ENCODE measurements at regions of chr3 and their contacts with region 1.

Region 1: GRCh38 chr3:49719214-49719884 is at the start of gene AMIGO3:
- DNase-seq: peak; percentile 92 to 93
- ATAC-seq: peak; percentile 74 to 86 (median 75)
- H3K4me3 ChIP-seq: peak within 1 kb of the TSS; percentile 75
- H3K4me3 Mint-ChIP-seq: peak within 1 kb of the TSS; percentile 93
- H3K27ac ChIP-seq: peak within 1 kb of the TSS; percentile 71
- H3K27ac Mint-ChIP-seq: peak within 1 kb of the TSS; percentile 87 to 93
- H3K4me1 ChIP-seq: peaks cover 42% of the 10 kb centered on the region
- H3K4me1 Mint-ChIP-seq: peaks cover 32 to 42% of the 10 kb centered on the region in 2 donors
- H3K27me3 ChIP-seq: no peaks in the 10 kb centered on the region
- H3K27me3 Mint-ChIP-seq: no peaks in the 10 kb centered on the region
- CTCF ChIP-seq: peak; percentile 85
- total RNA-seq, gene AMIGO3: 1.3 to 1.9 TPM in 2 of 3 donors, not detected in the other

Region 2: DNA sequence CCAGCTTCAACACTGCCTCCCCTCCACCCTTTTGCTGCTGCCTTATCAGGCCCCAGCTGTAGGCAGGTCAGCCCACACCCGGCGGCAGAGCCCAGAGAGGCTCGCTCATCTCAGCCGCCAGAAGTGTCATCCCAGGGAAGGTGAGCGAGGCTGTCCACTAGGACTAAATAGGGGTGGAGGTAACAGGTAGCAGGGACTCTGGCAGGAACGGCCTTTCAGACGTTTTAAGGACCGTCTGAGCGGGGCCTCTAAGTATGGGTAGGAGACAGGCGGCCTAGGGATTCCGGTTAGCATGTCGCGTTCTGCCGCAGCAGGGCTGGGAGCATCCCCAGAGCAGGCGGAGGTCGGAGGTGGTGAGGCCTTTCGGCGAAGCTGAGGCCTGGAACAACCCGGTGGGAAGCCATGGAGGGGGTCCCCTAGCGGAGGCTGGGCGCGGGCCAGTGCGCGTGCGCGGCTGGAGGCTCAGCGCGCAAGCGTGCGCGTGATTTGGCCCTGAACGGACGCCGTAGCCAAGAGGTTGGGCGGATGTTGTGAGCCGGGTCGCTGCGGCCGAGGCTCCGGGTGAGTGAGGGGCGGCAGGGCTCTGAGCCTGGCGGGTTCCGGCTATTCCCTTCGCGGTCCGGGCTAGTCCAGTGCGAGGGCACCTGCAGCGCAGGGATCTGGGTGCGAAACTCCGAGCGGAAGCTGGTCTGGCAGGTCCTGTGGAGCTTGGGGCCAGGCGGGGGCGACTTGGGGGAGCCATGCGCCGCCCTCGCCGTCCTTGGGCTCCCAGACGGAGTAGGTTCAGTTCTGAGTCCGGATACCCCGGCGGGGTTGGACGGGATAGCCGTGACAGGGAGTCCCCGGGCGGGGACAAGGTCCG is 30.1 kb before region 1 on chr3 and contains the starts of genes MST1 and RNF123:
- intact Hi-C with region 1: loop called (anchors 2 kb)
- DNase-seq: peak; percentile 92 to 97
- ATAC-seq: peak; percentile 87 to 89 (median 88)
- H3K4me3 ChIP-seq: peak within 1 kb of the TSS; percentile 86
- H3K4me3 Mint-ChIP-seq: peak within 1 kb of the TSS; percentile 99
- H3K27ac ChIP-seq: peak within 1 kb of the TSS; percentile 61
- H3K27ac Mint-ChIP-seq: peak within 1 kb of the TSS; percentile 91 to 96
- H3K4me1 ChIP-seq: peaks cover 44% of the 10 kb centered on the region
- H3K4me1 Mint-ChIP-seq: peaks cover 34 to 46% of the 10 kb centered on the region in 2 donors
- H3K27me3 ChIP-seq: peaks cover 2% of the 10 kb centered on the region
- H3K27me3 Mint-ChIP-seq: no peaks in the 10 kb centered on the region
- CTCF ChIP-seq: peak; percentile 26
- total RNA-seq, gene MST1: 9.5 to 19.1 (median 15.2) TPM
- total RNA-seq, gene RNF123: 48.5 to 58.7 (median 55.6) TPM

Region 3: GRCh38 chr3:49786241-49786958 is 67.1 kb after region 1 on chr3 and contains the start of gene IP6K1:
- intact Hi-C with region 1: loop called (anchors 1 kb)
- DNase-seq: peak; percentile 99 to 100
- ATAC-seq: peak; percentile 98 to 100 (median 99)
- H3K4me3 ChIP-seq: peak within 1 kb of the TSS; percentile 65
- H3K4me3 Mint-ChIP-seq: peak within 1 kb of the TSS; percentile 92
- H3K27ac ChIP-seq: peak within 1 kb of the TSS; percentile 94
- H3K27ac Mint-ChIP-seq: peak within 1 kb of the TSS; percentile 97 to 98
- H3K4me1 ChIP-seq: peaks cover 35% of the 10 kb centered on the region
- H3K4me1 Mint-ChIP-seq: peaks cover 19 to 22% of the 10 kb centered on the region in 2 donors
- H3K27me3 ChIP-seq: no peaks in the 10 kb centered on the region
- H3K27me3 Mint-ChIP-seq: peaks cover 0 to 5% of the 10 kb centered on the region in 2 donors
- CTCF ChIP-seq: no peak
- total RNA-seq, gene IP6K1: 53.7 to 68.7 (median 57.9) TPM

Region 4: GRCh38 chr3:49929331-49930240 is 210.2 kb after region 1 on chr3 and contains the start of gene MON1A:
- intact Hi-C with region 1: no loop called
- DNase-seq: peak; percentile 82 to 87
- ATAC-seq: peak; percentile 95 to 96 (median 96)
- H3K4me3 ChIP-seq: peak within 1 kb of the TSS; percentile 76
- H3K4me3 Mint-ChIP-seq: peak within 1 kb of the TSS; percentile 81
- H3K27ac ChIP-seq: peak within 1 kb of the TSS; percentile 66
- H3K27ac Mint-ChIP-seq: peak within 1 kb of the TSS; percentile 72 to 82
- H3K4me1 ChIP-seq: peaks cover 21% of the 10 kb centered on the region
- H3K4me1 Mint-ChIP-seq: peaks cover 13 to 29% of the 10 kb centered on the region in 2 donors
- H3K27me3 ChIP-seq: no peaks in the 10 kb centered on the region
- H3K27me3 Mint-ChIP-seq: no peaks in the 10 kb centered on the region
- CTCF ChIP-seq: no peak
- total RNA-seq, gene MON1A: 3.7 to 8.1 (median 7.9) TPM

Region 5: GRCh38 chr3:50008931-50009330 is 289.6 kb after region 1 on chr3:
- intact Hi-C with region 1: no loop called
- DNase-seq: no peak
- ATAC-seq: no peak
- H3K4me3 ChIP-seq: no peak overlapping the region
- H3K4me3 Mint-ChIP-seq: no peak overlapping the region
- H3K27ac ChIP-seq: no peak overlapping the region
- H3K27ac Mint-ChIP-seq: peak overlapping the region in 1 of 2 donors; percentile 16
- H3K4me1 ChIP-seq: no peaks in the 10 kb centered on the region
- H3K4me1 Mint-ChIP-seq: peaks cover 5 to 9% of the 10 kb centered on the region in 2 donors
- H3K27me3 ChIP-seq: no peaks in the 10 kb centered on the region
- H3K27me3 Mint-ChIP-seq: no peaks in the 10 kb centered on the region
- CTCF ChIP-seq: no peak

Measured in natural killer cell (primary cell).